Mammary epithelial cell (primary cell): ENCODE measurements at regions of chr13 and their contacts with region 1.

Region 1: DNA sequence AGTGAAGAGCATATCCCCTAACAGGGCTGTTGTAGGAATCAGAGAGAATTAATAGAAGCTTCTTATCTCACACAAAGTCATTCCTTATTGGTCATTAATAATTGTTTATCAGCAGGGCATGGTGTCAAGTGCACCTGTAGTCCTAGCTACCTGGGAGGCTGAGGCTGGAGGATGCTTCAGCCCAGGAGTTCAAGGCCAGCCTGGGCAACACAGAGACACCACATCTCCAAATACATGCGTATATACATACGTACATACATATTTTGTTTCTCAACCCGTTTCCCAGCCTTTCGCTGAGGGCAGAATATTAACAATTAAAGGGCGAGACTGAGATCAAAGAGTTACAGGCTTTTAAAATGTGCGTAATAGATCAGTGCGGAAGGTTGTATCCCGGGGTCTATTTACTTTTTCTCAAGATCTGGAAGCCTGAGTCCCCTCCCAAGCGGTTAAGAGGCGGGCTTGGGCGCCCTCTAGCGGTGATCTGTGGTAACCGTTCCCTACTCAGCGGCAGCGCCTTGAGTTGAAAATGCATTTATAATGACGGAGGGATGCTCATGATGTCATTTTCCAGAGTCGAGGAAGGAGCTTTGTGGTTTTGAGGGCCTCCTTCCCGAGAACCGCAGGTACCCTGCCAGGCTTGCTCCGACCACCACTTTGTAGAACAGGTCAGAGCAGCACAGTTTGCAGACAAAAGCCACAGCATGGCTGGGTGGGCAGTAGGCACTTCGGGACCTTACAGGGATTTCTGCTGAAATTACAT is 169.6 kb upstream of the GPR12 start:
- DNase-seq: peak; percentile 28
- H3K4me3 ChIP-seq: no peak overlapping the region
- H3K27ac ChIP-seq: no peak overlapping the region
- H3K4me1 ChIP-seq: no peaks in the 10 kb centered on the region
- H3K27me3 ChIP-seq: no peaks in the 10 kb centered on the region
- CTCF ChIP-seq: peak; percentile 86 to 89

Region 2: DNA sequence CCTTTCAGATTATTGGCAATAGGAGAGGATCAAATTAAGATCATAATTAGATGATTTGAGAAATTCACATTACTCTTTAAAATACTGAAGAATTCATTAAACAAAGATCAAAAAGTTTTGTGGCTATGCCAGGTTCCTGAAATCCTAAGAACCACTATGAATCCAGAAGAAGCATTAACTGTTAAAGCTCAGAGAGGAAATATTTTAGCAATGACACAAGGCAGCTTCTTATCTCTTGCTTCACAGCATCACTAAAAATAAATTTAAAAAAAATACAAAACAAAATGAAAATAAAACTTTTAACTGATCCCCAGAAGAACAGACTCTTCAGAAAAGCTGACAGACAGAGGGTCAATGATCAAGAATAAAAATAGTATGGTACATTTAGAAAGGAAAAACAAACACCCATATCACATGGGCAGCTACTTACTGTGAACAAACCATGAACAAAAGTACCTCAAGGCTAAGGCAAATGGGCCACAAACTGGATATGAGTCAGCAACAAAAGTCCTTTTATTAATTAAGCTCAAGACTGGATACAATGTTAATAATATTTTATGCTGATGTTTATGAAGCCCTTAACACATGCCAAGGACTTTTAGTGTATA is 727.7 kb before region 1 on chr13:
- CTCF ChIA-PET with region 1: interaction called, 12 read pairs
- dilution Hi-C with region 1: no loop called
- in situ Hi-C with region 1: no loop called
- intact Hi-C with region 1: no loop called
- DNase-seq: no peak
- H3K4me3 ChIP-seq: no peak overlapping the region
- H3K27ac ChIP-seq: no peak overlapping the region
- H3K4me1 ChIP-seq: no peaks in the 10 kb centered on the region
- H3K27me3 ChIP-seq: no peaks in the 10 kb centered on the region
- CTCF ChIP-seq: no peak

Region 3: DNA sequence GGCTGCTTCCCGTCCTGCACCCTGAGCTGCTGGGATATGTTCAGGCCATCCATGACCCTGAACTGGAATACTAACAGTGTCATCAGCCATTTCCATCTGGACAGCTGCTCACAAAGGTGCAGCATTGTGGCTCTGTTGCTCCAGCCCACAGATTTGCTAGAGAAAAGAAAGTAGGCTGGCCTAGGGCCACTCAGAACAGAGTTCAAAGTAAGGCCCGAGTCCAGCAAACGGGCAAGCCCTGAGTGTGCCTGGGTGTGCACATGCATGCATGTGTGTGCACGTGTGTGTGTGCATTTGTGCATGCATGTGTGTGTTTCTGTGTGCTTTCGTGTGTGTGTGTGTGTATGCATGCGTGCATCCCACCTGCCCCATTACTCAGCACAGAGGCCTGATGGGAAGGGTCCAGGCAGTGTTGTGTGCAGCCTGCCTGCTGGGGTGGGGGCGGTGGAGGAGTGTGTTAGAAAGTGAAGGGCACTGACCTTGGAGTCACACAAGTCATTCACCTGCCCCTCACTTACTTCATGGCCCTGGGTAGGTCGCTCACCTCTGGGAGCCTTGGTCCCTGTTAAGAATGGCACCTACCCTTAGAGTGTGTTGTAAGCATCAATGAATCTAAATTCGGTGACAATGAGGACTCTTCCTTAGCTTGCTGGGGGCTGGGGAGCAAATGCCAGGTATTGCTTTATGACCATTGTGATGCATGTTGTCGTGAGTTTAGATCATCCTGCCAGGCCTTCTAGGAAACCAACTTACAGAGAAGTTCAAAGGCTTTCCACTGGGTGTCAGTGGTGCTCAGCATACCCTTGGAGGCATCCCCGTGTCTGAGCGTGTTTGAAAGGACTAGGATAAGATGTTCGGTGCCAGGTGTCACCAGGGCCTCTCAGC is 222.8 kb before region 1 on chr13:
- CTCF ChIA-PET with region 1: interaction called, 4 read pairs
- dilution Hi-C with region 1: no loop called
- in situ Hi-C with region 1: loop called (anchors 5 to 10 kb)
- intact Hi-C with region 1: loop called (anchors 1 kb)
- DNase-seq: peak; percentile 44
- H3K4me3 ChIP-seq: no peak overlapping the region
- H3K27ac ChIP-seq: no peak overlapping the region
- H3K4me1 ChIP-seq: no peaks in the 10 kb centered on the region
- H3K27me3 ChIP-seq: peaks cover 3% of the 10 kb centered on the region
- CTCF ChIP-seq: peak; percentile 59 to 88

Region 4: DNA sequence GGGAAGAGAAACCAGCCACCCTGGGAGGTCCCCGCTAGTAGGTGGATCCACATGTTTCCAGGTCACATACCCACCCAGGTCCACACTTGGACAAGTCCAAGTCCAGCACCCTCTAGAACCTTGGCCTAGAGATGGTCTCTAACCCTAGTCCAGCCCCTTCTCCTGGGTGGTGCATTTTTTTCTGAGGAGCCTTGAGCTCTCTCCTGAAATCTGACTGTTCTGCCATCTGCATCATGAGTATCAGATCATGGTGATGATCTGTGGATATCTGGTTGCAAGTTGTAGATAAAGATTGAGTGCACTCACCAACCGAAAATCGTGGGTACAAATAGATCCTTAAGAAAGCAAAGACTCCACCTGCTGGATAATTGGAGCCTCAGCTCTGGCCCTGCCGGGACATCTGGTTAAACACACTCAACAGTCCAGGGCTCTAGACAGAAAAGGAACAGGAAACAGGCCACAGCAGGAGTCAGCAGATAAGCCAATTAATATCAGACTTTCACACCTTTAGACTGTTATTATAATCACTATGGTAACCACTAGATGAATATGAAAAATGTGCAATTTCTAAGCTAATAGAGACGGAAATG is 210.7 kb before region 1 on chr13:
- CTCF ChIA-PET with region 1: no interaction called
- dilution Hi-C with region 1: no loop called
- in situ Hi-C with region 1: loop called in 1 of 2 experiments (anchors 10 kb)
- intact Hi-C with region 1: no loop called
- DNase-seq: no peak
- H3K4me3 ChIP-seq: no peak overlapping the region
- H3K27ac ChIP-seq: no peak overlapping the region
- H3K4me1 ChIP-seq: no peaks in the 10 kb centered on the region
- H3K27me3 ChIP-seq: no peaks in the 10 kb centered on the region
- CTCF ChIP-seq: peak in 1 of 2 donors; percentile 22

Region 5: DNA sequence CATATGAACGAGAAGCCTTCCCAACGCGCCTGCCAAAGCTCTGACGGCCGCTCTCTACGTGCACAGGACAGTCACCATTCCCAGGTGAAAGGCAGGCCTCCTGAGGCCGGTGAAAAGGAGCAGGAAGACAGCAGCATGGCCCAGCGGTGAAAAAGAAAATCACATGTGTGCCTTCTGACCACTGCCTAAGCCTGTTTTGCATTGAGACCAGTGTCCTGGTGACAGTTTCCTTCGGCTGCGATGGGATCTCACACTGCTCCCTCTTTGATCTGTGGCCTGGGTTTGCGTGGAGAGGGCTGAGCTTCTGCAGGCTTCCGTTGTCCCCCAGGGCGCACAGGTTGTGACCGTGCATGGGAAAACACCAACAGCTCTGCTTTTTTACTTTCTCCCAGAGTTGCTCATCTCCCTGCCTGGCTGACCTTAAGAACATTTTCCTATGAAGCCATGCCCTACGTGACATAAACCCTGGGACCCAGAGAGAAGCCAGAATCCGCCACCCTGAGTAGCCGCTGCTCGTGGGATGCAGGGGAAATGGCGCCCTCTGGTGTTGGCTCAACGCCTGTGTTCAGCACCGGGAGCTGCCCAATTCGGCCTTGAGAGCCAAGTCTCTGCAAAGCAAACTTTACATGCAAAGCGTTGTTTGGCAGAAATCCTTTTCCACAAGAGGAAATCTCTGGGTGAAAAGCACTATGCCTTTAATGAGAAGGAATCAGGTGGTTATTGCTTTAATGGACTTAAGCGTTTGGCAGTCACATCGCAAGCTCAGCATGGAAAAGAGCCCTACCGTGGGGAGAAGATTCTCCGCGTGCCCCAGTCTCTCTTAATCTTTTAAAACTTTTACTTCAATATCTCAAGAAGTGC is 57.4 kb before region 1 on chr13:
- CTCF ChIA-PET with region 1: no interaction called
- dilution Hi-C with region 1: no loop called
- in situ Hi-C with region 1: no loop called
- intact Hi-C with region 1: loop called (anchors 2 kb)
- DNase-seq: peak; percentile 24
- H3K4me3 ChIP-seq: no peak overlapping the region
- H3K27ac ChIP-seq: no peak overlapping the region
- H3K4me1 ChIP-seq: no peaks in the 10 kb centered on the region
- H3K27me3 ChIP-seq: no peaks in the 10 kb centered on the region
- CTCF ChIP-seq: peak; percentile 84 to 93